Astrocyte of the cerebellum (primary cell): ENCODE measurements at regions of chr9 and their contacts with region 1.

Region 1: DNA sequence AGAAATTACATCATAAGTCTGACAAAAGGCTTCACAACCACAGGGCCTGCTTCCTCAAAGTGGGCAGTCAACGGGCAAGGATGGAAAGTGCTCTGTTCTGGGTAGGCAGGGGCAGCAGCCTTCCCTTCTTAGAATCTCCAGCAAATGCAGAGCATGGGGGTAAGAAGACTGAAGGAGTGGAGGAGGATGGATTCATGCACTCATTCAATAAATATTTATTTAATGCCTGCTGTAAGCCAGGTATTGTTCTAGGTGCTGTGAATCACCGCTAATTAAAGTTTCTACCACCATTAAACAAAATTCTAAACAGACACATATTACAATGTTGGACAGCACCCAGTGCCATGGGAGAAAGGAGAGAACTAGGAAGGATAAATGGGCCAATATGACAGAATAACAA is 195.6 kb downstream of the ELAVL2 start:
- DNase-seq: no peak
- H3K4me3 ChIP-seq: no peak overlapping the region
- CTCF ChIP-seq: no peak

Region 2: GRCh38 chr9:23551311-23551721 is 79.2 kb before region 1 on chr9:
- in situ Hi-C with region 1: loop called (anchors 5 kb)
- DNase-seq: no peak
- H3K4me3 ChIP-seq: no peak overlapping the region
- CTCF ChIP-seq: no peak

Region 3: GRCh38 chr9:23598994-23599393 is 31.5 kb before region 1 on chr9:
- in situ Hi-C with region 1: no loop called
- DNase-seq: no peak
- H3K4me3 ChIP-seq: no peak overlapping the region
- CTCF ChIP-seq: no peak